ENCODE measurements at regions of chr2 and their contacts with region 1.

Region 1: DNA sequence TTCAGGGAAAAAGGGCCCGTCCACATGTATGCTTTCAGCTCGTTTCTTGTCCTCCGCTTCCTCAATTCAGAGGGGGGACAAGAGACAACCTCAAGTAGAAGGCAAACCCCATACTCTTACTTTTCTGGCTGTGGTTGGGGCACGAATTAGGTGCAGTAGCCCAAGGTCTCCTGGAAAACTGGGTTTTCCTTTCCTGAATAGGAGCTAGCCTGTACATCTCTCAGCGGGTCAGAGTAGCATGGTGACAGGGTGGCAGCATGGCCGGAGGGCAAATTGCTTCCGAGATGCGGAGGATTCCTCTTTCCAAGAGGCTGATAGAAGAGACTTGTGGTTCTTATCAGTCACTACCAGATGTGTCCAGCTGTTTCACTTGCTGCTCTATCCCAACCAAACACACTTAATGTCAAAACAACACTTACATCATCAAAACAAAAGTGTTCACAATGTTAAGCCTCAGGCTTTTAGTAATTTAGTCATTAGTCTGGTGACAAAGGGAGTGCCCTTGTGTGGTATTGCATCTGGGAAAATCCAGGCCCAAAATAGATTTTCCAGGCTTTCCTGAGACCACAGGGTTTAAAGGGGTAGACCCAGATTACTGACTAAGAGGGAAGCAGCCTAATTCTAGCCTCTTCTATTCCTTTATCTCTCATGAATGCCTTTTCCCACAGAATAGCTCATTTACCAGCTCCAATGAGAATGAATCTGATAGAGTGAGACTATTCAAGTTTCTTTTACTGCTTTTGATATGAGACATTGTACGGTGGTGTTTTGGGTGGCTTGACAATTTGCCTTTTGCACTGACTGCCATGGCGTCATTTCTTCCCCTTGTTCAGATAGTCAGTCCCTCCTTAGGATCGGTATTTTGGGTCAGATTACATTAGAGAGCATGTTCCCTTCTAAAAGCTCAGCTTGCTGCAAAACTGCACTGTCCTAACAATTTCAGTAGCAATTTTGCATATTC is 162.0 kb downstream of the LTBP1 start:
- DNase-seq: peak; percentile 76 to 87 (median 80)
- ATAC-seq: peak; percentile 91
- H3K4me3 ChIP-seq: no peak overlapping the region
- H3K27ac ChIP-seq: peak overlapping the region; percentile 72
- H3K4me1 ChIP-seq: peaks cover 11 to 37% of the 10 kb centered on the region in 2 experiments; a peak in 4 of 5 replicates
- H3K27me3 ChIP-seq: no peaks in the 10 kb centered on the region
- CTCF ChIP-seq: no peak; a peak in 1 of 6 replicates
- EP300 ChIP-seq: peak; percentile 97
- POLR2A ChIP-seq: no peak
- RAD21 ChIP-seq: no peak; a peak in 2 of 4 replicates

Region 2: GRCh38 chr2:32951672-32952071 is 157.1 kb before region 1 on chr2:
- CTCF ChIA-PET with region 1: no interaction called
- POLR2A ChIA-PET with region 1: interaction called, 4 read pairs
- in situ Hi-C with region 1: no loop called
- intact Hi-C with region 1: loop called (anchors 10 kb)
- DNase-seq: no peak
- ATAC-seq: no peak
- H3K4me3 ChIP-seq: no peak overlapping the region
- H3K27ac ChIP-seq: no peak overlapping the region
- H3K4me1 ChIP-seq: peaks cover 26 to 42% of the 10 kb centered on the region in 2 experiments; a peak in 4 of 5 replicates
- H3K27me3 ChIP-seq: no peaks in the 10 kb centered on the region
- CTCF ChIP-seq: no peak
- EP300 ChIP-seq: no peak
- POLR2A ChIP-seq: no peak
- RAD21 ChIP-seq: no peak

Region 3: DNA sequence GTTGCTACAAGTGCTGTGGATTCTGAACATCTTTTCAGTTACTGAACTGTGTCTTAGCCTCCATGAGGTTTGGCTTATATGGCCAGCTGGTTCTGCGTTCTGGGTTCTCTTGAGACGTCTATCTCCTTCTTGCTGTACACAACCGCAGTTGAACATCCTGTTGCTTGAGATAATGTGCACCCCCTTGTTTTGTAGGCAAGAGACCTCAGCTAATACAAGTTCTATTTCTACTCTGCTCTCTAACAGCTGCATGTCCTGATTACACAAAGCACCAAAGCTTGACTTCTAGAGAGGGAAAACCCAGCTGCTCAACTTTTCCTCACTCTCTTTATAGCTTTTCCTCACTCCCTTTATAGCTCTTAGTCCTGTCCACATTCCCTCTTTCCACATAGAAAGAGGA is 14.0 kb after region 1 on chr2:
- CTCF ChIA-PET with region 1: no interaction called
- POLR2A ChIA-PET with region 1: interaction called, 7 read pairs
- in situ Hi-C with region 1: no loop called
- intact Hi-C with region 1: loop called (anchors 1 kb)
- DNase-seq: peak; percentile 44 to 80 (median 65)
- ATAC-seq: peak; percentile 88
- H3K4me3 ChIP-seq: no peak overlapping the region
- H3K27ac ChIP-seq: peak overlapping the region; percentile 41; the same call in 2 of the 3 replicates
- H3K4me1 ChIP-seq: peaks cover 0 to 23% of the 10 kb centered on the region in 2 experiments; a peak in 3 of 5 replicates
- H3K27me3 ChIP-seq: no peaks in the 10 kb centered on the region
- CTCF ChIP-seq: no peak
- EP300 ChIP-seq: peak; percentile 38; the same call in 1 of the 2 replicates
- POLR2A ChIP-seq: no peak
- RAD21 ChIP-seq: no peak; a peak in 1 of 4 replicates

Measured in K562 (cell line).